CD14-positive monocyte (primary cell): ENCODE measurements at regions of chr14 and their contacts with region 1.

Region 1: DNA sequence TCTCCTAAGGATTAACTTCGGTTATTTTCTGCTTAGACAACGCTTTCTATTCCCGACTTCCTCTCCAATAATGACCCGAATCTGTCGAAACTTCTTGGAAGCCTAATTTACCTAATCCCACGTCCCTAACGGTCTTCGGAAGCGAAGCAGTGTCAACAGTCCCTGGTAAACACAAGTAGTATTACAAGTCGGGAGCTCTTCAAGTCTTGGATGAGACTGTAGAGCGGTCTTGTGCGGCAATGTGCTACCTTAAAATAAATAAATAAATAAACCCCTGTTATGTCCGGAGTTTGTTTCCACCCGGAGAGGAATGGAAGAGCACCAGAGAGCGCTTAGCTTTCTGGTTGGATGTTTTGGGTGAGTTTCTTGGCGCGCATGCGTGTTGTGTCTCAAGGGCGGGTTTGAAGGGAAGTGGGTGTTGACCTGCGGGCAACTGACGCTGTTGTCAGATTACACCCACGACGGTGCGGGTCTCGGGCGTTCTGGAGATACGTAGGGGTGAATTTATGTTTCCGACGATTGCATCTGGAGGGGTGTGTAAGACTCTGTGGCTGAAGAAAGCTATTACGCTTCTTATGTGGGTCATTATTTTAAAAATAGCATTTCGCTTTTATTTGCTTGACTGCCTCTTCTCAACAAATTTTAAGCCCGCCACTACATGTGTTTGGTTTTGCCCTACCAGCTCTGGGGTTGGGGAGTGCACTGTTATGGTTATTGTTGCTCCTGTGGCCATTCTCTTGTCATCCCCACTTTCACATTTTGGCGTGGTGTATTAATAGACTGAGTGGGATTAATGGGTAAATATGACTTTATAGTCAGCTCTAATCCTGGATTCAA is at the starts of genes KIAA0586 and TIMM9:
- DNase-seq: peak; percentile 96 to 98 (median 98)
- H3K4me3 ChIP-seq: peak within 1 kb of the TSS; percentile 91 to 96 (median 96)
- H3K4me3 Mint-ChIP-seq: peak within 1 kb of the TSS; percentile 87 to 96
- H3K27ac ChIP-seq: peak within 1 kb of the TSS; percentile 70 to 99
- H3K27ac Mint-ChIP-seq: peak within 1 kb of the TSS; percentile 95 to 99 (median 98)
- H3K4me1 ChIP-seq: peaks cover 17% of the 10 kb centered on the region in 2 donors
- H3K4me1 Mint-ChIP-seq: peaks cover 16% of the 10 kb centered on the region
- H3K27me3 ChIP-seq: no peaks in the 10 kb centered on the region
- H3K27me3 Mint-ChIP-seq: no peaks in the 10 kb centered on the region
- CTCF ChIP-seq: no peak
- polyA plus RNA-seq, gene KIAA0586: 3.4 to 7.5 (median 4.4) TPM
- polyA plus RNA-seq, gene TIMM9: 26.2 to 45.7 (median 29.9) TPM

Region 2: DNA sequence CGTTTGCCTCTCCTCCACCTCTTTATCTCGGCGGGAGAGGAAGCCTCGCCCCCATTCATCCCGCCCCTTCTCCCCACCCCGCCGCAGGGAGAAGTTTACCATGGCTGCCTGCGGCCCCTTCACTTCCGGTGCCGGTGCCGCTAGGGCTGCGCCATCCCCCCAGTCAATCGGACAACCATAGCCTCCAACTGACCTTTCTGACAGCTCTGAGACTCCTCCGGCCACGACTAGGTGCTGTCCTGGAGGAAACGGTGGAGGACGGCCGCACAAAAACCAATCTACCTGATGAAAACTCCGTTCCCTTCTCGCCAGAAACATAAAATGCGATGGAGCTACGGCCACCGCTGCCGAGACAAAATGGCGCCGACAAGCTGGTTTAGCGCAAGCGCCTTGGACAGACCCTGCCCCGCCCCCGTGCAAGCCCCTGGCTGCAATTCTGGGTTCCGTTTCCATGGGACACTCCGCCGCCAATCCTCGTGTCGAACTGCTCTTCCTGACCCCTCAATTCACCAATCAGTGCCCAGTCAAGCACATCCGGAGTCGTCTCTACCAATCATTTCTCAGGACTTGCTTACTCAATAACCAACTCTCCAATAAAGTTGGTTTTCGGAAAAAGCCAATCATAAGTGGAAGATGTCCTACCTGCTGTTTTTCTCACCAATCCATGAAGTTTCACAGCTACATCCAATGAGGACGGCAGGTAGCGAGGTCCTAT is 129.6 kb before region 1 on chr14:
- intact Hi-C with region 1: loop called in 1 of 2 experiments (anchors 10 kb)
- DNase-seq: peak; percentile 100
- H3K4me3 ChIP-seq: peak overlapping the region; percentile 86 to 97 (median 95)
- H3K4me3 Mint-ChIP-seq: no peak overlapping the region
- H3K27ac ChIP-seq: peak overlapping the region; percentile 90
- H3K27ac Mint-ChIP-seq: no peak overlapping the region
- H3K4me1 ChIP-seq: peaks cover 14 to 32% of the 10 kb centered on the region in 2 donors
- H3K4me1 Mint-ChIP-seq: peaks cover 32% of the 10 kb centered on the region
- H3K27me3 ChIP-seq: no peaks in the 10 kb centered on the region
- H3K27me3 Mint-ChIP-seq: no peaks in the 10 kb centered on the region
- CTCF ChIP-seq: no peak